HepG2 (cell line): ENCODE measurements at regions of chr5 and their contacts with region 1.

Region 1: GRCh38 chr5:82165740-82166530 is 112.2 kb downstream of the RPS23 start:
- DNase-seq: peak; percentile 71
- ATAC-seq: peak; percentile 100
- H3K4me3 ChIP-seq: no peak overlapping the region
- H3K27ac ChIP-seq: no peak overlapping the region
- H3K4me1 ChIP-seq: peaks cover 14% of the 10 kb centered on the region
- H3K27me3 ChIP-seq: no peaks in the 10 kb centered on the region
- CTCF ChIP-seq: peak; percentile 88
- EP300 ChIP-seq: no peak
- POLR2A ChIP-seq: no peak
- RAD21 ChIP-seq: peak; percentile 73

Region 2: GRCh38 chr5:81301271-81302015 is 864.5 kb before region 1 on chr5 and contains the start of gene ZCCHC9:
- CTCF ChIA-PET with region 1: no interaction called
- POLR2A ChIA-PET with region 1: no interaction called
- in situ Hi-C with region 1: no loop called
- intact Hi-C with region 1: loop called (anchors 1 kb)
- DNase-seq: peak; percentile 90
- ATAC-seq: peak; percentile 96
- H3K4me3 ChIP-seq: peak within 1 kb of the TSS; percentile 93 to 95 (median 94)
- H3K27ac ChIP-seq: peak within 1 kb of the TSS; percentile 89
- H3K4me1 ChIP-seq: peaks cover 35% of the 10 kb centered on the region
- H3K27me3 ChIP-seq: no peaks in the 10 kb centered on the region; a peak in 1 of 5 replicates
- CTCF ChIP-seq: peak; percentile 84
- EP300 ChIP-seq: no peak; a peak in 1 of 4 replicates
- POLR2A ChIP-seq: peak; percentile 94 to 97
- RAD21 ChIP-seq: peak; percentile 43; the same call in 1 of the 2 replicates
- total RNA-seq, gene ZCCHC9: 52.5 and 70.7 TPM in 2 replicates

Region 3: DNA sequence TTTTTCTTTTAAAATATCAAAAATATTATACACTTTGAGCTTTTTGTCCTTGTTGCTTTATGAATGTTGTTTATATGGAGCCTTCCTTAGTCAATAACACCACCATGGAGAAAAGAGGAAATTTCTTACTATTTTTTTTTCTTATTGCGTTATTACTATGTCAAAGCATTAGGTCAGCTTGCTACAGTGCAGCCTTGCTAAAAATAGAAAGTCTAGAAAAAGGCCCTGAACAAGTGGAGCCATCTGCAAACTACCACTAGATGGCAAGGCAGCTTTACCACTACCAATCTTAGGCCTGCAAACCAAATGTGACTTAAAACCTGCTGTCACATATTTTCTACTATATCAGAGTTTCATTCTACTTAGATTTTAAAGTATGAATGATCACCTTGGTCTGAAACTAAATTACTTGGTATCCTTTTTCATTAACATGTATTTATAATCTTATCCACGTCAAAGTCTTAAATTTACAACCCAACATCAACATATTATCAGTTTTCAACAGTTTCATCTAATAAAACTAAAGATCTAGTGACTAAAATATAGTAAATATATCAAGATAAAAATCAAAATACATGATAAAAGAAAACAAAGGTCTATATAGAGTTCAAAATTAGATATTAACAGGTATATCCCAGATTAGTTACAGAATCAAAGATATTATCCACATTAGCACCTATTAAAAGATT is 658.9 kb before region 1 on chr5:
- CTCF ChIA-PET with region 1: interaction called, 10 read pairs
- POLR2A ChIA-PET with region 1: no interaction called
- in situ Hi-C with region 1: loop called (anchors 5 kb)
- intact Hi-C with region 1: loop called (anchors 1 kb)
- DNase-seq: peak; percentile 45
- ATAC-seq: peak; percentile 96
- H3K4me3 ChIP-seq: no peak overlapping the region
- H3K27ac ChIP-seq: no peak overlapping the region
- H3K4me1 ChIP-seq: no peaks in the 10 kb centered on the region
- H3K27me3 ChIP-seq: no peaks in the 10 kb centered on the region
- CTCF ChIP-seq: peak; percentile 69
- EP300 ChIP-seq: no peak
- POLR2A ChIP-seq: no peak
- RAD21 ChIP-seq: peak; percentile 48; the same call in 1 of the 2 replicates

Region 4: GRCh38 chr5:81751009-81751835 is 414.7 kb before region 1 on chr5 and contains the start of gene SSBP2:
- CTCF ChIA-PET with region 1: no interaction called
- POLR2A ChIA-PET with region 1: no interaction called
- in situ Hi-C with region 1: no loop called
- intact Hi-C with region 1: loop called (anchors 1 kb)
- DNase-seq: peak; percentile 69
- ATAC-seq: peak; percentile 89
- H3K4me3 ChIP-seq: peak within 1 kb of the TSS; percentile 60 to 75 (median 73); a peak in 5 of 6 replicates
- H3K27ac ChIP-seq: no peak within 1 kb of the TSS
- H3K4me1 ChIP-seq: no peaks in the 10 kb centered on the region
- H3K27me3 ChIP-seq: peaks cover 0 to 26% of the 10 kb centered on the region in 2 experiments; a peak in 4 of 5 replicates
- CTCF ChIP-seq: no peak
- EP300 ChIP-seq: peak in 1 of 2 experiments; percentile 95; a peak in 2 of 4 replicates
- POLR2A ChIP-seq: no peak
- RAD21 ChIP-seq: no peak
- total RNA-seq, gene SSBP2: not detected in 2 replicates

Region 5: DNA sequence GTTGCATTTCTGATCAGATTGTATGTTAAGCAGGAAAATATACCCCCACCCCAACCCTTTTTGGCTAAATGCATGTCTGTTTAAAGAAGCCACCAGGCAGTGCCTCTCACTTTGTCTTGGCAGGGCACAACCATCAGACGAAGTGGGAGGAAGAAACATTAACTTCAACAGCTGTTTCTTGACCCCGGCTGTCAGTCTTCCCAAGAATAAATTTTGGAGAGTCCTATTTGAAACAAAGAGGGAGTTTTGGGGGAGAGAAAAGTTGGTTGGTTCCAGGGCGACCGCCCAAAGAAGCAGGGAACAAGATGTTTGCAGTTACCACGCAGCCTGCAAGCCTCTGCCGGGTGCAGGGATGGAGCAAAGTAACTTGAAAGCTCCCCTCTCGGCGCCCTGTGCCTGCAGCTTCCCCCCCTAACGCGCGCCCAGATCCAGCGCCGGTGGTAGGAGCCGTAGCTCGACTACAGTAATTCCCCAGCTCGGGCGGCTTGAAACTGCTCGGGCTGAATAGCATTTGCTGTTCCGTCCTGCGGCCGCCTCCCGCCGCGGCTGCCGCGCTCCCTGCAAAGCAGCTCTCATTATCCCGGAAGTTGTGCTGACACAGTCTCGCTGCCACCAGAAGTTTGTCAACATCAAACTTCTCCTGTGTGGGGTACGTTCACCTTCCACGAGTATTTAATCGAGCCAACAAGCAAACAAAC is 314.3 kb before region 1 on chr5:
- CTCF ChIA-PET with region 1: no interaction called
- POLR2A ChIA-PET with region 1: no interaction called
- in situ Hi-C with region 1: no loop called
- intact Hi-C with region 1: loop called (anchors 5 kb)
- DNase-seq: peak; percentile 58
- ATAC-seq: peak; percentile 97
- H3K4me3 ChIP-seq: peak overlapping the region in 2 of 3 experiments; percentile 32 to 56; a peak in 4 of 6 replicates
- H3K27ac ChIP-seq: no peak overlapping the region
- H3K4me1 ChIP-seq: 0 out of 2 replicates have a peak, but pooled peaks cover 8% of the 10 kb centered on the region
- H3K27me3 ChIP-seq: peaks cover 3 to 15% of the 10 kb centered on the region in 2 experiments; a peak in 3 of 5 replicates
- CTCF ChIP-seq: no peak
- EP300 ChIP-seq: peak in 1 of 2 experiments; percentile 97; a peak in 2 of 4 replicates
- POLR2A ChIP-seq: no peak
- RAD21 ChIP-seq: 0 out of 2 replicates have a peak, but pooled peaks have one; percentile 30

Region 6: DNA sequence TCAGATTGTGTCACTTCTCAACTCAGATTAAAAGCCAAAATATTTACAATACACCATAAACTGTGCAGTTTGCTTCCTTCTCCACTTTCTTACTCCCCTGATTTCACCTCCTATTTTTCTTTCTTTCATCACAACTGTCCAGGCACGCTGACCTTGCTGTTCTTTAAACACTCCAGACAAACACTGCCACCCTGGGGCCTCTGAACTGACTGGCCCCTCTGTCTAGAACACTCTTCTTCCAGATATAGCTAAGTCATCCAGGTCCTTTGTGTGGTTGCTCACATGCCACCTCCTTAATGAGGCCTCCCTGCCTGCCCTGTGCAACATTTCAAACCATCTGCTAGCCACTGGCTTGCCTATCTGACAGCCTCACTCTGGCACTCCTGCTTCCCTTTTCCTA is 147.5 kb before region 1 on chr5:
- CTCF ChIA-PET with region 1: no interaction called
- POLR2A ChIA-PET with region 1: no interaction called
- in situ Hi-C with region 1: no loop called
- intact Hi-C with region 1: loop called (anchors 10 kb)
- DNase-seq: peak; percentile 80
- ATAC-seq: peak; percentile 96
- H3K4me3 ChIP-seq: no peak overlapping the region; a peak in 1 of 6 replicates
- H3K27ac ChIP-seq: peak overlapping the region; percentile 30
- H3K4me1 ChIP-seq: peaks cover 27% of the 10 kb centered on the region
- H3K27me3 ChIP-seq: no peaks in the 10 kb centered on the region
- CTCF ChIP-seq: peak; percentile 65
- EP300 ChIP-seq: peak in 1 of 2 experiments; percentile 65; a peak in 1 of 4 replicates
- POLR2A ChIP-seq: no peak
- RAD21 ChIP-seq: no peak